Activated CD4-positive, alpha-beta T cell treated with anti-CD3 and anti-CD28 coated beads for 36 hours (primary cell): ENCODE measurements at regions of chr3 and their contacts with region 1.

Region 1: GRCh38 chr3:49469936-49470713 is at the start of gene DAG1:
- DNase-seq: peak; percentile 98
- ATAC-seq: peak; percentile 92
- H3K4me3 Mint-ChIP-seq: peak within 1 kb of the TSS; percentile 81
- H3K27ac Mint-ChIP-seq: peak within 1 kb of the TSS; percentile 92
- H3K4me1 Mint-ChIP-seq: peaks cover 20% of the 10 kb centered on the region
- H3K27me3 Mint-ChIP-seq: no peaks in the 10 kb centered on the region
- total RNA-seq, gene DAG1: 9.0 to 9.2 TPM

Region 2: DNA sequence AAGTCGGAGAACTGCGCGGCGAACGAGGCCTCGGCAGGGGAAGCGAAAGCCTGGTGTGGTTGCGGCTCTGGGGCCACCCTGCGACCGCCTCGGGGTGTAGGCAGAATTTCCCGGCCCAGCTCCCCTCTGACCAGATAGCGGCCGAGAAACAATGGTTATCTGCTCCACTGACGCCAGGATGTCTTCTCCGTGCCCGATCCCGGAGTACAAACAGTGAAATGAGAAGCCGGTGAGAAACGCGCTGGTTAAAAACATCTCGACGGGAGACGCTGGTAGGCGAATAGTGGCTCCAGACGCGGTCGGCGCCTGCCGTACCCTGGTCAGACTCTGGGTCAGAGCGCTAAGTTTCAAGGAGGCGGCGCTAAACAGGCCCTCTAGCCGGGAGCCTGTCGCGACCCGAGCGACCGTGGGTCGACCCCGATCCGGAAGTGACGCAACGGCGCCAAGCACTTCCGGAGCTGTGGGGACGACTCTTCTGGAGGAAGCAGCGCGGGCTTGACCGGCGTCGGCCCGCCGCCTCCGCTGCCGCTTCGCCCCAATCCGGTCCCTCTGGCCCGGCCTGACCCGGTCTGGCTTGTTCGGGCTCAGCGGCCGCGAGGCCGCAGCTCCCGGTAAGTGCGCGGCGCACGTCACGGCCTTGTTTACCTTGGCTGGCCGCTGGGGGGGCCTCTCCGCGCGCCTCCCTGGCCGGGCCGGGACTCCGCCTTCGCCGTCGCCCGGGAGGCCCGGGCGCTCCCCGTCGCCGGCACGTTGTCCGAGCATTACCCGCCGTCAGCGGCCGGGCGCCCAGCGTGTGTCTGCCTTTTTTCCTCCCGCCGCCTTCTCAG is 551.5 kb before region 1 on chr3 and contains the start of gene ARIH2:
- CTCF ChIA-PET with region 1: no interaction called
- POLR2A ChIA-PET with region 1: no interaction called
- intact Hi-C with region 1: loop called in 1 of 2 experiments (anchors 1 kb)
- DNase-seq: peak; percentile 94
- ATAC-seq: peak; percentile 75
- H3K4me3 Mint-ChIP-seq: peak within 1 kb of the TSS; percentile 90
- H3K27ac Mint-ChIP-seq: peak within 1 kb of the TSS; percentile 100
- H3K4me1 Mint-ChIP-seq: peaks cover 30% of the 10 kb centered on the region
- H3K27me3 Mint-ChIP-seq: no peaks in the 10 kb centered on the region
- total RNA-seq, gene ARIH2: 105 to 112 TPM

Region 3: DNA sequence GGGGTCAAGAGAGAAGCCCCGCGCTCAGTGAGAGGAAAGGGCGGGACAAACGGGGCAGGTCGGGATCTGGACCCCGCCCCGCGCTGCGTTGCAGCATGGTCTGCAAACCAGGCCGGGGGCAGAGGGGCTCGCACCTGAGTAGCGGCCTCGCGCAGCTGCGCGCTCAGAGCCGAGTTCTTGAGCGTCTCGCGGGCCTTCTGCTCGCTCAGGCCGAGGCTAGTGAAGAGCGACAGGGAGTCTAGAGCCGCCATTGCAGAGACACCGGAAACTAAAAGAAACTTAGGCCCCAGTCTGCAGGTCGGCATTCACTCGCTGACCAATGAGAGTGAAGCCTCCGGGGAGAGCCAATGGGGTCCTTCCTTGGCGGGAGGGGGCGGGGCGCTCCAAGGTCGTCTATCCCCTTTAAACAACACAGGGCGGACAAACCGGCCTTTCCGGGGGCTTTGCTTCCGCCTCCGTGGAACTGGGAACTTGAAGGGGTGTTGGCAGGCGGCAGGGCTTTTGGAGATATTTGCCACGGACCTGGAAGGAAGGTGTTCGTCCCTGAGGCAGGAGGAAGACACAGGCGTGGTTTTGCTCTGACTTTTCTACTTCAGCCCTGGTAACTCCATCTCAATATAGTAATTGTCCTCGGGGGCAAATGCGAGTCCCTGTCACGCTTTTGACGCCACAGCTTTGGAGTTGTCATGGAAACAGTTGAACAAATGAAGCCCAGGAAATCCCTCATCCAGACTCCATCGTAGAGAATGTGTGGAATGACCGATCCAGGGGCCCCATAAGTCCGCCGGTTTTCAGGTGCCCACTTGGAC is 365.4 kb before region 1 on chr3 and contains the start of gene QARS1:
- CTCF ChIA-PET with region 1: no interaction called
- POLR2A ChIA-PET with region 1: no interaction called
- intact Hi-C with region 1: loop called in 1 of 2 experiments (anchors 1 kb)
- DNase-seq: peak; percentile 94
- ATAC-seq: peak; percentile 100
- H3K4me3 Mint-ChIP-seq: peak within 1 kb of the TSS; percentile 96
- H3K27ac Mint-ChIP-seq: peak within 1 kb of the TSS; percentile 96
- H3K4me1 Mint-ChIP-seq: peaks cover 21% of the 10 kb centered on the region
- H3K27me3 Mint-ChIP-seq: no peaks in the 10 kb centered on the region
- total RNA-seq, gene QARS1: 240 to 342 TPM

Region 4: DNA sequence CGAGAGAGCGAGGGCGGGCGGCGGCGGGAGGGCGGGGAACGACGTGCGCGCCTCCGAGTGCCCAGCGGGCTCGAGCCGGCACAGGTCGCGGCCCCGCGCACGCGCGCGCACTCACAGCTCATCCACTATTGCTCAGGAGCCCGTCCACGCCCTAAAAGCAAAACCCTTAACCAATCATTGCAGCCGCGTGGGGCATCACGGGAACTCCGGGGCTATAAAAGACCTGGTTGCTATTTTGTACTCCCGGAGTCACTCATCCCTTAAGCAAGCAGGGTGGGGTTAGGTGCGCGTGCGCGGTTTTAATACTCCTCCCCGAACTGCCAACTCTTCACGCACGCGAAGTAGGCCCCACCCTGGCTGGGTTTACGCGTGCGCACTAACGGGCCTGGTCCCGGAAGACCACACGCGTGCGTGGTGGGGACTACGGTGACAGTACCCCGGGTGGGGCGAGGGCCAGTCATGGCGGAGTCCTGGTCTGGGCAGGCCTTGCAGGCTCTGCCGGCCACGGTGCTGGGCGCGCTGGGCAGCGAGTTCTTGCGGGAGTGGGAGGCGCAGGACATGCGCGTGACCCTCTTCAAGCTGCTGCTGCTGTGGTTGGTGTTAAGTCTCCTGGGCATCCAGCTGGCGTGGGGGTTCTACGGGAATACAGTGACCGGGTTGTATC is 58.0 kb before region 1 on chr3 and contains the starts of genes RHOA and TCTA:
- CTCF ChIA-PET with region 1: interaction called, 4 read pairs
- POLR2A ChIA-PET with region 1: interaction called, 5 read pairs
- intact Hi-C with region 1: loop called (anchors 1 kb)
- DNase-seq: peak; percentile 99
- ATAC-seq: peak; percentile 88
- H3K4me3 Mint-ChIP-seq: peak within 1 kb of the TSS; percentile 97
- H3K27ac Mint-ChIP-seq: peak within 1 kb of the TSS; percentile 97
- H3K4me1 Mint-ChIP-seq: peaks cover 63% of the 10 kb centered on the region
- H3K27me3 Mint-ChIP-seq: no peaks in the 10 kb centered on the region
- total RNA-seq, gene RHOA: 438 to 449 TPM
- total RNA-seq, gene TCTA: 9.4 TPM

Region 5: DNA sequence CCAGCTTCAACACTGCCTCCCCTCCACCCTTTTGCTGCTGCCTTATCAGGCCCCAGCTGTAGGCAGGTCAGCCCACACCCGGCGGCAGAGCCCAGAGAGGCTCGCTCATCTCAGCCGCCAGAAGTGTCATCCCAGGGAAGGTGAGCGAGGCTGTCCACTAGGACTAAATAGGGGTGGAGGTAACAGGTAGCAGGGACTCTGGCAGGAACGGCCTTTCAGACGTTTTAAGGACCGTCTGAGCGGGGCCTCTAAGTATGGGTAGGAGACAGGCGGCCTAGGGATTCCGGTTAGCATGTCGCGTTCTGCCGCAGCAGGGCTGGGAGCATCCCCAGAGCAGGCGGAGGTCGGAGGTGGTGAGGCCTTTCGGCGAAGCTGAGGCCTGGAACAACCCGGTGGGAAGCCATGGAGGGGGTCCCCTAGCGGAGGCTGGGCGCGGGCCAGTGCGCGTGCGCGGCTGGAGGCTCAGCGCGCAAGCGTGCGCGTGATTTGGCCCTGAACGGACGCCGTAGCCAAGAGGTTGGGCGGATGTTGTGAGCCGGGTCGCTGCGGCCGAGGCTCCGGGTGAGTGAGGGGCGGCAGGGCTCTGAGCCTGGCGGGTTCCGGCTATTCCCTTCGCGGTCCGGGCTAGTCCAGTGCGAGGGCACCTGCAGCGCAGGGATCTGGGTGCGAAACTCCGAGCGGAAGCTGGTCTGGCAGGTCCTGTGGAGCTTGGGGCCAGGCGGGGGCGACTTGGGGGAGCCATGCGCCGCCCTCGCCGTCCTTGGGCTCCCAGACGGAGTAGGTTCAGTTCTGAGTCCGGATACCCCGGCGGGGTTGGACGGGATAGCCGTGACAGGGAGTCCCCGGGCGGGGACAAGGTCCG is 219.2 kb after region 1 on chr3 and contains the starts of genes MST1 and RNF123:
- CTCF ChIA-PET with region 1: no interaction called
- POLR2A ChIA-PET with region 1: no interaction called
- intact Hi-C with region 1: loop called in 1 of 2 experiments (anchors 1 kb)
- DNase-seq: peak; percentile 95
- ATAC-seq: peak; percentile 74
- H3K4me3 Mint-ChIP-seq: peak within 1 kb of the TSS; percentile 90
- H3K27ac Mint-ChIP-seq: peak within 1 kb of the TSS; percentile 90
- H3K4me1 Mint-ChIP-seq: peaks cover 30% of the 10 kb centered on the region
- H3K27me3 Mint-ChIP-seq: no peaks in the 10 kb centered on the region
- total RNA-seq, gene MST1: 8.7 to 9.7 TPM
- total RNA-seq, gene RNF123: 25.2 to 32.7 TPM

Region 6: GRCh38 chr3:50154840-50155474 is 684.8 kb after region 1 on chr3 and contains the start of gene SEMA3F:
- CTCF ChIA-PET with region 1: no interaction called
- POLR2A ChIA-PET with region 1: no interaction called
- intact Hi-C with region 1: loop called in 1 of 2 experiments (anchors 1 kb)
- DNase-seq: peak; percentile 79
- ATAC-seq: peak; percentile 89
- H3K4me3 Mint-ChIP-seq: peak within 1 kb of the TSS; percentile 60
- H3K27ac Mint-ChIP-seq: no peak within 1 kb of the TSS
- H3K4me1 Mint-ChIP-seq: peaks cover 8% of the 10 kb centered on the region
- H3K27me3 Mint-ChIP-seq: peaks cover 29% of the 10 kb centered on the region
- total RNA-seq, gene SEMA3F: 0.25 to 0.46 TPM